ENCODE measurements at regions of chr2 and their contacts with region 1.

Region 1: GRCh38 chr2:50401772-50402653 is 629.9 kb downstream of the NRXN1 start:
- DNase-seq: peak; percentile 64
- ATAC-seq: no peak
- H3K4me3 Mint-ChIP-seq: no peak overlapping the region
- H3K27ac Mint-ChIP-seq: no peak overlapping the region
- H3K4me1 Mint-ChIP-seq: no peaks in the 10 kb centered on the region
- H3K27me3 Mint-ChIP-seq: no peaks in the 10 kb centered on the region

Region 2: DNA sequence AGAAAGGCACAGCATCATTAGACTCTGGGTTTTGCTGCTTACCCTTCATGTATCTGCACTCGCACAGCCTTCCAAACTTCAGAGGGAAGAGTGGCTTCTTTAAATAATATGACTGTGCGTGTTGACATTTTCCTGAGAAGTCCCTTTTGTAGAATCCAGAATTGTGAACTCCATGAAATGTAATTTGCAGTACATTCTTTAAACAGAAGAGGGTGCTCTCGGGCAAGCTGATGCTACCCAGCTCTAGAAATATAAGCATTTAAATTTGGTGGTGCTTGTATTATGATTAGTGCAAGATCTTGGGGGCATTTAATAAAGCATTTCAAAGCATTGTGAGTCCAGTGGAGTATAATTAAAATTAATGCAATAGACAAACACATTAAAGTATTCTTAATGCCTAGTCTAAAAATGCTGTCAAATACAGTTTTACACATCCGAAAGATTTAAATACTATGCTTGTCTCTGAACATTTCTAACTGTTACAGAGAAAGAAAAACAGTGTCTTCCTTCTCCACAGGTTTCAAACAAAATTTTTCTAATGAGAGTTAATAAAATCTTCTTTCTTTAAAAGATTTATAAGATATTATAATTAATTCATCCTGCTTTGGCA is 1801.7 kb before region 1 on chr2:
- CTCF ChIA-PET with region 1: interaction called, 3 read pairs
- POLR2A ChIA-PET with region 1: no interaction called
- intact Hi-C with region 1: loop called in 1 of 2 experiments (anchors 2 kb)
- DNase-seq: peak; percentile 10
- ATAC-seq: no peak
- H3K4me3 Mint-ChIP-seq: no peak overlapping the region
- H3K27ac Mint-ChIP-seq: no peak overlapping the region
- H3K4me1 Mint-ChIP-seq: no peaks in the 10 kb centered on the region
- H3K27me3 Mint-ChIP-seq: no peaks in the 10 kb centered on the region

Region 3: GRCh38 chr2:48946449-48947048 is 1455.5 kb before region 1 on chr2:
- CTCF ChIA-PET with region 1: interaction called, 8 read pairs
- POLR2A ChIA-PET with region 1: no interaction called
- intact Hi-C with region 1: loop called in 1 of 2 experiments (anchors 1 kb)
- DNase-seq: peak; percentile 50
- ATAC-seq: peak; percentile 78
- H3K4me3 Mint-ChIP-seq: no peak overlapping the region
- H3K27ac Mint-ChIP-seq: no peak overlapping the region
- H3K4me1 Mint-ChIP-seq: no peaks in the 10 kb centered on the region
- H3K27me3 Mint-ChIP-seq: peaks cover 1% of the 10 kb centered on the region

Region 4: DNA sequence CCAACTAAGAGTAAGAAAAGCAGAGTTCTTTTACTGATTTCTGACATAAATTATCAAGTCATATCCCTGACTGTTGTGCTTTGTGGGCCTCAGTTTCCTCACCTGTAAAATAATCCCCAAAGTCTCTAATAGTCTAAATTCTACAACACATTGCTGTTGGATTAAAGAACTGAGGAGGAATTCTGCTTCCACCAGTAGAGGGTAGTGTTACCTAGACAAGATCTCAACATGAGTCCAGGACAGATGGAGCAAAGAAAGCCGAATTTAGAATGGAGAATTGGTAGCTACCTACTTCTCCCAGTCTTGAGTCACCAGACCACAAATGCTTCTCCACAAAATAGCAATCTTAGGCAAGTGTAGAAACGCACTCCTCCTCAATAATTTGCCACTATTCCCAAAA is 785.2 kb before region 1 on chr2:
- CTCF ChIA-PET with region 1: no interaction called
- POLR2A ChIA-PET with region 1: no interaction called
- intact Hi-C with region 1: loop called in 1 of 2 experiments (anchors 5 kb)
- DNase-seq: no peak
- ATAC-seq: no peak
- H3K4me3 Mint-ChIP-seq: no peak overlapping the region
- H3K27ac Mint-ChIP-seq: no peak overlapping the region
- H3K4me1 Mint-ChIP-seq: no peaks in the 10 kb centered on the region
- H3K27me3 Mint-ChIP-seq: no peaks in the 10 kb centered on the region

Region 5: GRCh38 chr2:49687918-49688317 is 714.1 kb before region 1 on chr2:
- CTCF ChIA-PET with region 1: no interaction called
- POLR2A ChIA-PET with region 1: no interaction called
- intact Hi-C with region 1: loop called in 1 of 2 experiments (anchors 5 kb)
- DNase-seq: no peak
- ATAC-seq: no peak
- H3K4me3 Mint-ChIP-seq: no peak overlapping the region
- H3K27ac Mint-ChIP-seq: no peak overlapping the region
- H3K4me1 Mint-ChIP-seq: no peaks in the 10 kb centered on the region
- H3K27me3 Mint-ChIP-seq: no peaks in the 10 kb centered on the region